CD8-positive, alpha-beta T cell (primary cell): ENCODE measurements at regions of chr7 and their contacts with region 1.

Region 1: DNA sequence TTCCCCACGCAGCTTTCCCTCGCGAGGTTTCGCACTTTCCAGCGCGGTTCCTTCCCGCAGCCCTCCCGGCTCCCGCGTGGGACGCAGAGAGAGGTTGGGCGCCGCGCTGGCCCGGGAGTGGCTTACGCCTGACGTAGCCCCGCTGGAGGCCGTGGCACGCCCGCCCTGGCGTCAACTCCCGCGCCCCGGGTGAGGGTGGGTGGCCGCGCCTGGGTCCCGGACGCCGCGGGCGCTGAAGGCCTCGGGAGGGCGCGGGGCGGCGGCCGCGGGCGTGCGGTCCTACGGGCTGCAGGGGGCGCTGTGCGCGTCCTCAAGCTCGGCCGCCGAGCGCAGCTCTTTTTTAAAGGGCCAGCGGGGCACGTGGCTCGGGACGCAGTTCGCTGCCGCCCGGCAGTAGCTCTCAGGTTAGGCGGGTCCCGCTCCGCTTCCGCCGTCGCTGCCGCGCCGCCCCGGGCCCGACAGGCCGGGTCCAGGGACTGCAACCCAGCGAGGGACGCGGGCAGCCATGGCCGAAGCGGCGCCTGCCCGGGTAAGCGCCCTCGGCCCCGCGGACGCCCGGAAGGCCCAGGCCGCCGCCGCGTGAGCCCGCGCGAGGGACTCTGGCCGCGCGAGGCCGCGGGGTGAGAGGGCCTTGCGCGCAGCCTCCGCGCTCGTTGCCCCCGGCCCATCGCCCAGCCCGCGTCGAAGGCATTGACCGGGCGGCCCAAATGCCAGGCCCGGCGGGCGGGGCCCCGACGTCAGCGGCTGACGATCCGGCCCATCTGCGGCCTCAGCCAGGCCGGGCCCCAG is at the start of gene ZNF783:
- DNase-seq: peak; percentile 68 to 96 (median 83)
- ATAC-seq: peak; percentile 93
- H3K4me3 ChIP-seq: peak within 1 kb of the TSS; percentile 69
- H3K4me3 Mint-ChIP-seq: peak within 1 kb of the TSS; percentile 86
- H3K27ac ChIP-seq: peak within 1 kb of the TSS; percentile 50 to 83
- H3K27ac Mint-ChIP-seq: peak within 1 kb of the TSS; percentile 94
- H3K4me1 ChIP-seq: peaks cover 30% of the 10 kb centered on the region
- H3K4me1 Mint-ChIP-seq: peaks cover 37% of the 10 kb centered on the region
- H3K27me3 ChIP-seq: no peaks in the 10 kb centered on the region
- H3K27me3 Mint-ChIP-seq: no peaks in the 10 kb centered on the region
- CTCF ChIP-seq: peak; percentile 87
- total RNA-seq, gene ZNF783: 24.0 to 27.3 TPM

Region 2: DNA sequence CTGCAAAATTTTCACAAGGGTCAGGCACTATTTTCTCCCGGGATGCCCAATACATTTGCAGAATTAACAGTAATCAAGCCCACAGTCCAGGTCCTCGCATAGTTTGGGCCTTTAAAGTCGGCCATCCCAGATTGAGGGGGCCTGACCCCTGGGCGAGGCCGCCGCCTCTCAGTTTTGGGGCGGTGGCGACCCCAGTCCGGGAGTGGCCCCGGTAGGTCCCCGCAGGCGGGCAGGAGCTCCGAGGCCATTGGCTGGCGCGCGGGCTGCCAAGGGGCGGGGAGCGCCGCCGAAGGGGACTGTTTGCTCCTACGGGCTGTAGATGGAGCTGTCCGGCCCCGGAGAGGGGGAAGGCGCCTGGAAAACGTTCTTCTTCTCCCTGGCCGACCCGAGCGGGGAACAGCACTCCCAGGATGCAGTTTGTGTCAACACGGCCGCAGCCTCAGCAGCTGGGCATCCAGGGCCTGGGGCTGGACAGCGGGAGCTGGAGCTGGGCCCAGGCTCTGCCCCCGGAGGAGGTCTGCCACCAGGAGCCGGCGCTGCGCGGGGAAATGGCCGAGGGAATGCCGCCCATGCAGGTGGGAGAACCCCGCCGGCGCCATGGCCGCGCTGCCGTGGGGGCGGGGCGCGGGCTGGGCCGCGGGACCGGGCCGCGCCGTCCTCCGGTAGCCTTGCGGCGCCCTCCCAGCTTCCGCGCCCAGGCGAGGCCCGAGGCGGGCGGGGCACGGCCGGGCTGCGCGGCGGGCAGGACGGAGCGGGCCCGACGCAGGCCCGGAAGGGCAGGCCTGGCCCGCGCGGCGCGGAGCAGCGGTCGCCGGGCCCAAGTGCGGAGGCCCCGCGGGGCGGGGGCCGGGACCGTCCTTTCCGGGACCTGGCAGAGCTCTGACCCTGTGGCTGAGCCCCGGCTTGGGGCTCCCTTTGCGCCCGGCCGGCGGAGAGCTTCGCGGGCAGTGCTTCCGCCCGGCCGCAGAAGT is 66.6 kb before region 1 on chr7 and contains the start of gene ZNF282:
- CTCF ChIA-PET with region 1: interaction called, 4 read pairs
- POLR2A ChIA-PET with region 1: no interaction called
- intact Hi-C with region 1: loop called in 1 of 2 experiments (anchors 10 kb)
- DNase-seq: peak; percentile 31 to 80 (median 65)
- ATAC-seq: peak; percentile 78
- H3K4me3 ChIP-seq: peak within 1 kb of the TSS; percentile 83 to 84
- H3K4me3 Mint-ChIP-seq: peak within 1 kb of the TSS; percentile 86
- H3K27ac ChIP-seq: peak within 1 kb of the TSS; percentile 60 to 68
- H3K27ac Mint-ChIP-seq: peak within 1 kb of the TSS; percentile 84
- H3K4me1 ChIP-seq: peaks cover 17% of the 10 kb centered on the region
- H3K4me1 Mint-ChIP-seq: peaks cover 43% of the 10 kb centered on the region
- H3K27me3 ChIP-seq: no peaks in the 10 kb centered on the region
- H3K27me3 Mint-ChIP-seq: no peaks in the 10 kb centered on the region
- CTCF ChIP-seq: no peak
- total RNA-seq, gene ZNF282: 12.5 to 14.9 TPM

Region 3: DNA sequence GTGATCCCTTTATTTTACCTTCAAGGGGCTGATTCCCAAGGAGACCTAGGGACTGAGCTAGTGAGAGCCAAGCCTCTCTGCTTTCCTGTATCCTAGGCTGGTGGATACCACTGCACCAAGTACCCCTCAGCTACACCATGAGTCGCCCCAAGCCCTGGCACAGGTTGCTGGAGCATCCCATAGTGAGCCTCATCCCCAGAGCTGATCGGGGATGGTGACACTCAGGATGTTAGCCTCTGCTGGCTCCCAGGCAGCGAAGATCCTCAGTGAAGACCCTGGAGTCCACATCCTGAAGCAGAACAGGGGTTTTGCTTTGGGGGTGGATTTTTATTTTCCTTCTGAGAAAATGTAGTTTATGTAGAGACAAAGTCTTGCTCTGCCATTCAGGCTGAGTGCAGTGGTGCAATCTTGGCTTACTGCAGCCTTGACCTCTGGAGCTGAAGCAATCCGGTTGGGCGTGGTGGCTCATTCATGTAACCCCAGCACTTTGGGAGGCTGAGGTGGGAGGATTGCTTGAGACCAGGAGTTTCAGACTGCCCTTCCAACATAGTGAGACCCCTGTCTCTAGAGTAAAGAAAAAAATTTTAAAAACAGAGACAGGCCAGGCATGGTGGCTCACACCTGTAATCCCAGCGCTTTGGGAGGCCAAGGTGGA is 35.1 kb before region 1 on chr7:
- CTCF ChIA-PET with region 1: no interaction called
- POLR2A ChIA-PET with region 1: no interaction called
- intact Hi-C with region 1: no loop called
- DNase-seq: no peak
- ATAC-seq: no peak
- H3K4me3 ChIP-seq: no peak overlapping the region
- H3K4me3 Mint-ChIP-seq: no peak overlapping the region
- H3K27ac ChIP-seq: no peak overlapping the region
- H3K27ac Mint-ChIP-seq: no peak overlapping the region
- H3K4me1 ChIP-seq: no peaks in the 10 kb centered on the region
- H3K4me1 Mint-ChIP-seq: no peaks in the 10 kb centered on the region
- H3K27me3 ChIP-seq: no peaks in the 10 kb centered on the region
- H3K27me3 Mint-ChIP-seq: no peaks in the 10 kb centered on the region
- CTCF ChIP-seq: no peak

Region 4: GRCh38 chr7:149239345-149240191 is 22.5 kb before region 1 on chr7 and contains the start of gene ZNF212:
- CTCF ChIA-PET with region 1: interaction called, 8 read pairs
- POLR2A ChIA-PET with region 1: no interaction called
- intact Hi-C with region 1: loop called (anchors 1 kb)
- DNase-seq: peak; percentile 76 to 92 (median 89)
- ATAC-seq: peak; percentile 100
- H3K4me3 ChIP-seq: peak within 1 kb of the TSS; percentile 81 to 95
- H3K4me3 Mint-ChIP-seq: peak within 1 kb of the TSS; percentile 92
- H3K27ac ChIP-seq: peak within 1 kb of the TSS; percentile 41 to 67
- H3K27ac Mint-ChIP-seq: peak within 1 kb of the TSS; percentile 91
- H3K4me1 ChIP-seq: peaks cover 23% of the 10 kb centered on the region
- H3K4me1 Mint-ChIP-seq: peaks cover 34% of the 10 kb centered on the region
- H3K27me3 ChIP-seq: peaks cover 0 to 4% of the 10 kb centered on the region in 2 experiments
- H3K27me3 Mint-ChIP-seq: peaks cover 7% of the 10 kb centered on the region
- CTCF ChIP-seq: peak; percentile 85
- total RNA-seq, gene ZNF212: 20.9 to 22.1 TPM

Region 5: GRCh38 chr7:149422129-149422913 is 160.3 kb after region 1 on chr7:
- CTCF ChIA-PET with region 1: interaction called, 8 read pairs
- POLR2A ChIA-PET with region 1: interaction called, 7 read pairs
- intact Hi-C with region 1: loop called (anchors 1 kb)
- DNase-seq: peak; percentile 50 to 91 (median 66)
- ATAC-seq: peak; percentile 97
- H3K4me3 ChIP-seq: peak overlapping the region; percentile 71 to 76
- H3K4me3 Mint-ChIP-seq: peak overlapping the region; percentile 76
- H3K27ac ChIP-seq: peak overlapping the region; percentile 60 to 82
- H3K27ac Mint-ChIP-seq: peak overlapping the region; percentile 75
- H3K4me1 ChIP-seq: peaks cover 5% of the 10 kb centered on the region
- H3K4me1 Mint-ChIP-seq: peaks cover 12% of the 10 kb centered on the region
- H3K27me3 ChIP-seq: no peaks in the 10 kb centered on the region
- H3K27me3 Mint-ChIP-seq: no peaks in the 10 kb centered on the region
- CTCF ChIP-seq: no peak

Region 6: DNA sequence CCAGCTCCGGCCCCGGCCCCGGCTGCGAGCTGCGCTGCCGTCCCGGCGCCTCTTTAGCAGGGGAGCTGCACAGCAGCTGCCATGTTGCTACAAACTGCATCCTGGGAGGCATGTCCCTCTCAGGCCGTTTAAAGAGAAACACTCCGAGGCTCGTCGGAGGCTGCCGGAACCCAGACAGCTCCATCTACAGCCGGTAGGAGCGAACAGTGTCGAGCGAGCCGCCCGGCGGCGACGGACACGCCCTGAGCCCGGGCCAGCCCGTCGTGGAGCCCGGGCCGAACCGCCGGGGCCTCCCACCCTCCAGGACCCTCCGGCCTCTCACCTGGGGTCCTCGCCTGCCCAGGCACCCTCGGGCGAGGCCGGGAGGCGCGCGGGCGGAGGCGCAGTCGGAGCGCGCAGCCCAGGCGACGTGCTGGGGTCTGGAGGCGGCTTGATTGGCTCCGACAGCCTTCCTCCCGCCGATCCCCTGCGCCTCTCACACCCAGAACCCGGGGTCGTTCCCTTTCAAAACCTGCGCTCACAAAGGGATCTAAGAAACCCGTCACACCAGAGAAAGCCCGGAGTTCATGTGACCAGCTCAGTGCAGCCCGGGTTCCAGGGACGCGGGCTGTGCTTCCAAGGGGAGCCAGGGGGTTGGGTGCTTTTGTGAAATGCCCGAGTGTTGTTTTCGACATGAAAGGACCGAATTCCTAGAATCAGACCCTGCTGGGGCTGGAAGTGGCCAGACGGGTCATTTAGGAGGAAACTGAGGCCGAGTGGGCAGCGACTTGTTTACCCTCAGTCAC is 198.7 kb after region 1 on chr7 and contains the start of gene ZNF777:
- CTCF ChIA-PET with region 1: interaction called, 3 read pairs
- POLR2A ChIA-PET with region 1: interaction called, 12 read pairs
- intact Hi-C with region 1: loop called in 1 of 2 experiments (anchors 1 kb)
- DNase-seq: peak; percentile 66 to 90 (median 81)
- ATAC-seq: peak; percentile 97
- H3K4me3 ChIP-seq: peak within 1 kb of the TSS; percentile 69 to 74
- H3K4me3 Mint-ChIP-seq: peak within 1 kb of the TSS; percentile 88
- H3K27ac ChIP-seq: peak within 1 kb of the TSS; percentile 55 to 69
- H3K27ac Mint-ChIP-seq: peak within 1 kb of the TSS; percentile 72
- H3K4me1 ChIP-seq: peaks cover 24% of the 10 kb centered on the region
- H3K4me1 Mint-ChIP-seq: peaks cover 33% of the 10 kb centered on the region
- H3K27me3 ChIP-seq: no peaks in the 10 kb centered on the region
- H3K27me3 Mint-ChIP-seq: peaks cover 10% of the 10 kb centered on the region
- CTCF ChIP-seq: peak; percentile 57
- total RNA-seq, gene ZNF777: 21.0 to 22.2 TPM

Region 7: DNA sequence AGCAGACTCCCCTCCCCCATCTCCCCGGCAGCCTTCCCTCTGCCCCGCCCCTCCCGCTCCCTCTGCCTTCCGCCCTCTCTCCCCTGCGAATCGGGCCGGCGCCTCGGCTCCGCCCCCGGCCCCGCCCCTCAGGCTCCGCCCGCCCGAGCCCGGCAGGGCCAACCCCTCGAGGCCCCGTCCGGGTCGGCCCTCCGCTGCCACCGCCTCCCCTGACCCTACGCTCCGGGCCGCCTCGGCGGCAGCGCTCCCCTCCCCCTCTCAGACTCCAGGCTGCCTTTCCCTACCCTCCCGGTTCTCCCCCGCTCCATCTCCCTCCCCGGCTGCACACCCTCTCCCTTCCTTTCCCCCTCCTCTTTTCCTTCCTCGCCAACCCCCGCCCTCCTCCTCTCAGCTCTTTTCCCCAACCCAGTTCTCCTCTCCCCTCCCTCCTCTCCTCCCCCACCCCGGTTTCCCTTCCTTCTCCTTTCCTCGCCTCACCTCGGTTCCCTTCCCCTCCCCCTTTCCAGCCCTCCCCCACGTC is 509.8 kb after region 1 on chr7:
- CTCF ChIA-PET with region 1: no interaction called
- POLR2A ChIA-PET with region 1: no interaction called
- intact Hi-C with region 1: loop called in 1 of 2 experiments (anchors 5 kb)
- DNase-seq: peak; percentile 70 to 91 (median 84)
- ATAC-seq: peak; percentile 88
- H3K4me3 ChIP-seq: peak overlapping the region; percentile 63 to 66
- H3K4me3 Mint-ChIP-seq: peak overlapping the region; percentile 71
- H3K27ac ChIP-seq: no peak overlapping the region
- H3K27ac Mint-ChIP-seq: no peak overlapping the region
- H3K4me1 ChIP-seq: peaks cover 12% of the 10 kb centered on the region
- H3K4me1 Mint-ChIP-seq: peaks cover 6% of the 10 kb centered on the region
- H3K27me3 ChIP-seq: no peaks in the 10 kb centered on the region
- H3K27me3 Mint-ChIP-seq: no peaks in the 10 kb centered on the region
- CTCF ChIP-seq: no peak